IMR-90 (cell line): ENCODE measurements at regions of chr1 and their contacts with region 1.

Region 1: DNA sequence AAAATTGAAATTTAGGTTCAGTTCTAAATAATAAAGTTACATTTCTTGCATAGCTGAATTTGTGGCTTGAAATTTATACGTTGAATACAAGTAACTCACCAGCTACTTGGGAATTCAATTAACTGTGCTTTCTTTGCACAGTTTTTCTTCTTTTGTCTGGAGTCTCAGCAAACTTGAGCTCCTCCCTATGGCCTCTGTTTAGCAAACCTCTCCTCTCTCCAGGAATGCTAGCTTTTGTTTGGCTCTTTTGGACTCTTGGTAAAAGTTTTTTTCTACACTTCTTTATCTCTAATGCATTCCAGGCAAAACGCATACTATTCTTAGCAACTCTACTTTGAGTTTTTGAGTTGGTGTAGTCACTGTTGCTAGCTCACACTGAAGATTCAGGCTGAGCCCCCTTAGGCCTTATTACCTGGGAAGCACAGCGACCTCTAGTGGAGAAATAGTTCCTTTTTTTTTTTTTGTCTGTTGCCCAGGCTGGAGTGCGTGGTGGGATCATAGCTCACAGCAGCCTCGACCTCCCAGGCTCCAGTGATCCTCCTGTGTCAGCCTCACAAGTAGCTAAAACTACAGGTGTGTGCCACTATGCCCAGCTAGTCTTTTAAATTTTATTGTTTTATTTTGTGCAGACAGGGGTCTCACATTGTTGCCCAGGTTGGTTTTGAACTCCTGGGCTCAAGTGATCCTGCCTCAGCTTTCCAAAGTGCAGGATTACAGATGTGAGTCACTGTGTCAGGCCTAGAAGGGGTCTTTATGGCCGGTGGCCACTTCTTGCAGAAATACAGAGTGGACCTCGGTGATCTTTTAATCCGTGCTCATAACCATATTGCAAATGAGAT is 61.7 kb downstream of the CASQ2 start:
- DNase-seq: peak; percentile 63
- ATAC-seq: peak; percentile 27
- H3K4me3 ChIP-seq: no peak overlapping the region
- H3K27ac ChIP-seq: no peak overlapping the region
- H3K4me1 ChIP-seq: no peaks in the 10 kb centered on the region
- H3K27me3 ChIP-seq: peaks cover 37% of the 10 kb centered on the region
- CTCF ChIP-seq: peak; percentile 62
- POLR2A ChIP-seq: no peak
- RAD21 ChIP-seq: peak; percentile 61

Region 2: DNA sequence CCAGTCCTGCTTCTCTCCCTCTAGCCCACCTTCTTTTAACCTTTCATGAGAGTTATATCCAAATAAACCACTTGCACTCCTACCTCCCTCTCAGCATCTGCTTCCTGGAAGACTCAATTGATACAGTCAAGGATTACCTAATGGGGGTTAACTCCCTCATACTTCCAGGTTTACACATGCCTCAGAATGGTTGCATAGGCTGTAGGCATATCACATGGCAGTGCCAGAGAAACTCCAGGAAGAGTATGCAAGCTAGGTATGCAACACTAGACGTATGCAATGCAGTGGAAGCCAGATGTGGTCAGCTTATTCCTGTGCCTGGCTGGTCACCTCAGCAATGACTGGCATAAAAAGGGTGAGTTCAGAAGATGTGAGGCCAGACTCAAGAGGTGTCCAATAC is 97.8 kb before region 1 on chr1:
- CTCF ChIA-PET with region 1: interaction called, 19 read pairs
- POLR2A ChIA-PET with region 1: no interaction called
- dilution Hi-C with region 1: no loop called
- in situ Hi-C with region 1: loop called (anchors 5 kb)
- intact Hi-C with region 1: loop called (anchors 1 kb)
- DNase-seq: no peak
- ATAC-seq: no peak
- H3K4me3 ChIP-seq: no peak overlapping the region
- H3K27ac ChIP-seq: no peak overlapping the region
- H3K4me1 ChIP-seq: peaks cover 1% of the 10 kb centered on the region; the same call in 1 of the 2 replicates
- H3K27me3 ChIP-seq: peaks cover 44% of the 10 kb centered on the region
- CTCF ChIP-seq: no peak
- POLR2A ChIP-seq: no peak
- RAD21 ChIP-seq: no peak

Region 3: DNA sequence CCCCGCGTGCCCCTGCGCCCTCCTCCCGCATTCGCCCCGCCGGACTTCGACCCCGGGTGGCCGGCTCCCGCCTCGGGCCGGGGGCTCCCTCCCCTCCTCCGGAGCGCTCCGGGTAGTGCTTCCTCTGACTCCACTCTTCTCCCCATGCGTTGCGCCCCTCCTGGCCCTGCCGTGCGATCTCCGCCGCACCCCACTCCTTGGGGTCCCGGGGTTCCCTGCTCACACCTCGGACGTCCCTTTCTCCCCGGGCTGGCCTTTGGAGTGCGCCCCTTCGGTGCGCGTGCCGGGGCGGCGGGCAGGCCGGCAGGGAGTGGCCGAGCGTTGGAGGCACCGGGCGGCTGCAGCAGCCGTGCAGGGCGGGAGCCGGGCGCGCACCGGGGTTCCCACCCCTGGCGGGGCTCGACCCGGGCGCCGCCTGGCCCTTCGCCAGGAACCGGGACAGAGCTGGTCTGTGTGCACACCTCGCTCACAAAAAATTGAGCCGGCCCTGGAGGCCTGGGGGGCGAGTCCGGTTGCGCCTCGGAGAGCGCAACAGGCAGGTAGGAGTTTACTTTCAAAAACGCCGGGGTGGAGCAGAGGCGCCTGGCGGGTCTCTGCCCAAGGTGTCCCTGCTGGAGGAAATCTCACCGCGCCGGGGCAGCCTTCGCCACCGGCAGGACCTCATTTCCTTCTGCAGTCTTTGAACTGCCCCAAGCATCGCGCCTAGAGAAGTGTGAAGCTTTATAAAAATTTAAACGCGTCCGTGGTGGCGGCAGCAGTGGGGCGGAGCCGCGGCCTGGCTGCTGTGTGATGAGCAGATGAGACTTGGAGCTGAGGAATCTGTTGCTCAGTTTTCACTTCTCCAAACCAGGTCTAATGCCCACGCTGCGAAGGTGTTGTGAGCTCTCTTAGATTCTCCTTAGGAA is 64.4 kb before region 1 on chr1:
- CTCF ChIA-PET with region 1: interaction called, 4 read pairs
- POLR2A ChIA-PET with region 1: no interaction called
- dilution Hi-C with region 1: no loop called
- in situ Hi-C with region 1: no loop called
- intact Hi-C with region 1: loop called (anchors 5 kb)
- DNase-seq: peak; percentile 20
- ATAC-seq: peak; percentile 68
- H3K4me3 ChIP-seq: peak overlapping the region; percentile 80
- H3K27ac ChIP-seq: peak overlapping the region; percentile 8; the same call in 1 of the 2 replicates
- H3K4me1 ChIP-seq: no peaks in the 10 kb centered on the region
- H3K27me3 ChIP-seq: no peaks in the 10 kb centered on the region; the same call in 1 of the 2 replicates
- CTCF ChIP-seq: peak; percentile 5; the same call in 1 of the 2 replicates
- POLR2A ChIP-seq: no peak
- RAD21 ChIP-seq: peak; percentile 4; the same call in 1 of the 2 replicates

Region 4: GRCh38 chr1:115669002-115669673 is 37.7 kb before region 1 on chr1:
- CTCF ChIA-PET with region 1: interaction called, 14 read pairs
- POLR2A ChIA-PET with region 1: no interaction called
- dilution Hi-C with region 1: no loop called
- in situ Hi-C with region 1: no loop called
- intact Hi-C with region 1: no loop called
- DNase-seq: peak; percentile 91
- ATAC-seq: peak; percentile 71
- H3K4me3 ChIP-seq: no peak overlapping the region
- H3K27ac ChIP-seq: peak overlapping the region; percentile 21; the same call in 1 of the 2 replicates
- H3K4me1 ChIP-seq: peaks cover 19% of the 10 kb centered on the region
- H3K27me3 ChIP-seq: no peaks in the 10 kb centered on the region
- CTCF ChIP-seq: no peak
- POLR2A ChIP-seq: no peak
- RAD21 ChIP-seq: no peak

Region 5: GRCh38 chr1:115717541-115717940 is 10.7 kb after region 1 on chr1:
- CTCF ChIA-PET with region 1: interaction called, 10 read pairs
- POLR2A ChIA-PET with region 1: interaction called, 9 read pairs
- dilution Hi-C with region 1: no loop called
- in situ Hi-C with region 1: no loop called
- intact Hi-C with region 1: no loop called
- DNase-seq: peak; percentile 15
- ATAC-seq: no peak
- H3K4me3 ChIP-seq: no peak overlapping the region
- H3K27ac ChIP-seq: no peak overlapping the region
- H3K4me1 ChIP-seq: no peaks in the 10 kb centered on the region
- H3K27me3 ChIP-seq: peaks cover 28% of the 10 kb centered on the region
- CTCF ChIP-seq: peak; percentile 35
- POLR2A ChIP-seq: no peak
- RAD21 ChIP-seq: 0 out of 2 replicates have a peak, but pooled peaks have one; percentile 26

Region 6: DNA sequence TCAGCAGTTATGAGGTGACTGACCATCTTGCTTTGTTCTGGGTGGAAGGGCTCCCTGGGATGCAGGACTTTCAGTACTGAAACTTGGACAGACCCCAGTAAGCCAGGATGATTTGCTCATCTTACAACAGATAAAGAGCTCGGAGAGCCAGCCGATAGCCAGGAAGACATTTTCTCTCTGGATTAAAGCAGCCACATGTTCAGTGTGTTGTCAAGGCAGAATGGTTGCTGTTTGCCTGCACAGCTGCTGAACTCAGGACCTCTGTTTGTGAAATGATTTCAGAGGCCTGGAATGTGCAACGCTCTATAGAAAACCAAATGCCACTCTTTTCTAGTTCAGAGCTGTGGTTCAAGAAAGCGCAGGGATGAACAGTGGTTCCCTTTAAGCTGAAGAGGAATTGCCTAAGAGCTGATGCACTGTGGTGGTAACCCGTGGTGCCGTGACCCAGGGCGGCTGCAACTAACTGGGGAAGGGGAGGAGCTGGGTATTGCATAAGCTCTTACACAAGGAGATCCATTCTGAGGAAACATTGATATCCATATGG is 21.0 kb after region 1 on chr1:
- CTCF ChIA-PET with region 1: interaction called, 11 read pairs
- POLR2A ChIA-PET with region 1: no interaction called
- dilution Hi-C with region 1: no loop called
- in situ Hi-C with region 1: no loop called
- intact Hi-C with region 1: no loop called
- DNase-seq: peak; percentile 75
- ATAC-seq: peak; percentile 94
- H3K4me3 ChIP-seq: no peak overlapping the region
- H3K27ac ChIP-seq: peak overlapping the region; percentile 15; the same call in 1 of the 2 replicates
- H3K4me1 ChIP-seq: peaks cover 2% of the 10 kb centered on the region; the same call in 1 of the 2 replicates
- H3K27me3 ChIP-seq: 0 out of 2 replicates have a peak, but pooled peaks cover 2% of the 10 kb centered on the region
- CTCF ChIP-seq: no peak
- POLR2A ChIP-seq: no peak
- RAD21 ChIP-seq: no peak

Region 7: DNA sequence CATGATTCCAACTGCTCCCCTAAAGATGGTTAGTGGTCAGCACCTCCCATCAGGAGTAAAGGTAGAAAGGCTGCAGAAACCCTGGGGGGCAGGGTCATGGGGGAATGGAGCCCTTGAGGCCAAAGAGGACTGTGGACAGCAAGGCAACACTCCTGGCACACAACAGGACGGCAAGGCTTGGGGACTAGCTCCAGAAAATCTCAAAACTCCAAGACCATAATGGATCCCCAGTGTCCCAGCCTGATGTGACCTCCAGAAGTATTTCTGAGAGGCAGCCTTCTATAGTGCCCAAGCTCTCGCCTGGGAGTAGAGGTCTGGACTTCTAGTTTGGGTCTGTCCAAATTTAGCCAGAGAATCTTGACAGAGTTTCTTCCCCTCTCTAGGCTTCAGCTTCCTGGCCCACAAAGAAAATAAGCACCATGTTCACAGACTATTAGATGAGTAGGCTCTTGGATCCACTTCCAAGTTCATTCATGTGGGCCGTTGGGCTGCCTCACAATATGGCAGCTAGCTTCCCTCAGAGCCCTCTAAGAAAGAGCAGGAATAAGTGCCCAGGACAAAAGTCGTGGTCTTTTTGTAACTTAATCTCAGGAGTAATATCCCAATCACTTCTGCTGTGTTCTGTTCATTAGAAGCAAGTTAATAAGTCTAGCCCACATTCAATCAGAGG is 1054.3 kb after region 1 on chr1:
- CTCF ChIA-PET with region 1: no interaction called
- POLR2A ChIA-PET with region 1: interaction called, 10 read pairs
- dilution Hi-C with region 1: no loop called
- in situ Hi-C with region 1: no loop called
- intact Hi-C with region 1: no loop called
- DNase-seq: no peak
- ATAC-seq: no peak
- H3K4me3 ChIP-seq: no peak overlapping the region
- H3K27ac ChIP-seq: no peak overlapping the region
- H3K4me1 ChIP-seq: no peaks in the 10 kb centered on the region
- H3K27me3 ChIP-seq: no peaks in the 10 kb centered on the region
- CTCF ChIP-seq: no peak
- POLR2A ChIP-seq: no peak
- RAD21 ChIP-seq: no peak